ENCODE measurements at regions of chrX and their contacts with region 1.

Region 1: DNA sequence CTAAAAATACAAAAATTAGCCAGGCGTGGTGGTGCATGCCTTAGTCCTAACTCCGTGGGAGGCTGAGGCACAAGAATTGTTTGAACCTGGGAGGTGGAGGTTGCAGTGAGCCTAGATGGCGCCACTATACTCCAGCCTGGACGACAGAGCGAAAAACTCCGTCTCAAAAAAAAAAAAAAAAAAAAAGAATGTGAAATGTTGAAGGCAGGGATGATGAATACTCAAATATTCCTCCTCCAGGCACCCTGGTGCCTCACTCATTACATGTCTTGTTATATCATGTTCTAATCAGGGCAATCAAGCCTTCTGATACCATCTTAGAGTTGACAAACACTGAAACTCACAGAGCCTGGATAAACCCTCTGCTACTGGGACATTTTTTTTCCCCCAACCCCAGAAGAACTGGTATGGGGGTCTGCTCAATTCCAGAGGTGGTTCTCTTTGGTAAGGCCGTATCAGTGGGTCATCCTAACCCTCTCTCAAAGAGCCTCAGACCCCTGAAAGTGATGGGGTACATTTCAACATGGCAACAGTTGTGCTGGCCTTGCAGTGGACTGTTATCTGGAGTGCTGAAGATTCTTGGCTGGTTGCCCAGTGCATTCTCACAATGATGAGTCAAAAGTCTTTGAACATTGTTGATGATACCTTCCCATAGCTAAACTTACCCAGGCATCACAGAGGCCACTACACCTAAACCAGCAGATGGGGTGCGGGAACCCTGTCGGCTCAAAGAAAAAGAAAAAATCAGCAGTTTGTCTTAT is 2.4 kb upstream of the SH3KBP1 start:
- DNase-seq: no peak
- ATAC-seq: no peak

Region 2: GRCh38 chrX:19593690-19594089 is 296.1 kb before region 1 on chrX:
- intact Hi-C with region 1: loop called in 1 of 2 experiments (anchors 10 kb)
- DNase-seq: no peak
- ATAC-seq: peak; percentile 51

Region 3: GRCh38 chrX:19682712-19683331 is 206.9 kb before region 1 on chrX:
- intact Hi-C with region 1: no loop called
- DNase-seq: peak; percentile 46 to 62
- ATAC-seq: no peak

Region 4: DNA sequence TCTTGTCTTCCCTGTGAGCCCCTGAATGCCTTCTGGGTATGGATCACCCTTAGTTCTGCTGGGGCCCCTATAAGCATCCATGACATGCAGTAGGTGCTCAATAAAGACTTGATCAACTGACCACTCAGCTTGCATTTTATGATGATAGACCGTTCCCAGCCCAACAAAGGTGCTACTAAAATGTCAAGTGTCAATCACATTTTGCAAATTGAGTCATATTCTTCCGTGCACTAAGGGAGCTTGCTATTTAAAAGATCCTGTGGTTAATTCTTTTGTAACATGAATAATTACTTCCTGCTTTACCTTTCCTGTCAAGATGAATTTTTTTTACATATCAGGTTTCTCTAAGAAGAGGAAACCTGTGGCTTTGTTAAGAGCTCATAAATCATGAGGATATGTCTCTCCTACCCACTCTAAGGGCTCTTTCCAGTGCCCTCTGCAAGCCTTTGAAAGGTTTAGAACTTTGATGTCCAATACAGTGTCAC is 50.0 kb before region 1 on chrX:
- intact Hi-C with region 1: no loop called
- DNase-seq: no peak
- ATAC-seq: no peak

Region 5: DNA sequence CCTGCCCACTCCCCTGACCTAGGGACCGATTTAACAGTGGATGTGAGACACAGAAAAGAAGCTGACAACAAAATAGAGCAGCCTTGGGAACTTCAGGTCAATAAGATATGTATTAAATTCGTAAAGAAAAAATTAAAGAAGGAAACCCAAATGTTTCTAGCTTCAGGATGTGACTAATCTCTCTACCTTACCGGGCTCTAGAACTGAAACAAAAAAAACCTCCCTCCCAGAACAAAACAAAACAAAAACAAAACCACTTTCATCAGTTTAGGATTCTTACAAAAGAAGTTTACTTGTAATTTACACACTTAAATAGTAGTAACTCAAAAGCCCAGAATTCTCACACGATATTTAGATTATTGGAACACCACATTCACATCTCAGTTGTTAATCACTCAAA is 562.7 kb after region 1 on chrX:
- intact Hi-C with region 1: no loop called
- DNase-seq: no peak
- ATAC-seq: no peak

Measured in left colon (tissue), 2 donors.